Activated CD4-positive, alpha-beta memory T cell treated with anti-CD3 and anti-CD28 coated beads, Interleukin-2, amount 10 ng/mL, durations not matched to agents 7 days and 5 days (primary cell): ENCODE measurements at regions of chr1 and their contacts with region 1.

Region 1: GRCh38 chr1:145963995-145964901 is at the starts of genes ANKRD34A and POLR3GL:
- DNase-seq: peak; percentile 95
- H3K4me3 Mint-ChIP-seq: peak within 1 kb of the TSS; percentile 96
- H3K27ac Mint-ChIP-seq: peak within 1 kb of the TSS; percentile 79
- H3K4me1 Mint-ChIP-seq: peaks cover 50% of the 10 kb centered on the region
- H3K27me3 Mint-ChIP-seq: peaks cover 5% of the 10 kb centered on the region
- total RNA-seq, gene ANKRD34A: 2.9 to 3.7 TPM
- total RNA-seq, gene POLR3GL: 32.4 to 33.7 TPM

Region 2: DNA sequence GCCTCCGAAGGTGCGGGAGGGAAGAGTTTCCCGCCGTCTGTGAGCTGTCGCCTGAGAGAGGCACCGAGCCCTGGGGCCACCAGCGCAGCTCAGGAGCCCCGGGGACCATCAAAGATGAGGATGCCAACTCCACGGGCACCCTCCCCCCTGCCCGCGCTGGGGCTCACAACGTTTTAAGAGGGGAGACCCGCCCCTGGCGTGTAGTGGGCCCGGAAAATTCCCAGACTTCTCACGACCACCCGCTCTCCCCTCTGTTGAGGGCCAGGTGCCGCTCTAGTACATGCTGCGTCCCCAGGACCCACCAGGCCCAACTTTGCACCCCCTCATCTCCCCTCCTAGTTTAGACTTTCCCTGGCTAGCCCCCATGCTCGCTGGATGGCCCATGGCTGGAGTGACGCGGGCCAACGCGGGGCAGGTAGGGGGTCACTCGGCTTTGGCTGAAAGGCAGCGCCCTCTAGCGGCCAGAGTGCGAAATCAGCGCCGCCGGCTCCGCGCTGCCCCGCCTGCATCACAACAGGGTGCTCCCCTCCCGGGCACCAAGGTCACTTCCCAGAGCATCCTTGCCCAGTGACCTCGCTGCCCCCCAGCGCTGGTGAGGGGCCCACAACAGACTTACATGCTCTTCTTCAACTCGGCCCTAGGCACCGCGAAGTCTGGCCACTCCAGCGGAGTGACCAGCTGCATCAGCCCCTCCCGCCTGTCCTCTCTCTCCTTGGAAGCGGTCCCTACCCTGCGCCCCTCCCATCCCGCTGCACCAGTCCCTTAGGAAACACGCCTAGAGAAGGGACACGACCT is 243.2 kb before region 1 on chr1:
- CTCF ChIA-PET with region 1: no interaction called
- POLR2A ChIA-PET with region 1: no interaction called
- DNase-seq: peak; percentile 75
- H3K4me3 Mint-ChIP-seq: peak overlapping the region; percentile 24
- H3K27ac Mint-ChIP-seq: no peak overlapping the region
- H3K4me1 Mint-ChIP-seq: peaks cover 28% of the 10 kb centered on the region
- H3K27me3 Mint-ChIP-seq: peaks cover 17% of the 10 kb centered on the region

Region 3: GRCh38 chr1:145918144-145918992 is 45.9 kb before region 1 on chr1 and contains the start of gene PEX11B:
- CTCF ChIA-PET with region 1: no interaction called
- POLR2A ChIA-PET with region 1: interaction called, 38 read pairs
- DNase-seq: peak; percentile 92
- H3K4me3 Mint-ChIP-seq: peak within 1 kb of the TSS; percentile 90
- H3K27ac Mint-ChIP-seq: peak within 1 kb of the TSS; percentile 94
- H3K4me1 Mint-ChIP-seq: peaks cover 47% of the 10 kb centered on the region
- H3K27me3 Mint-ChIP-seq: no peaks in the 10 kb centered on the region
- total RNA-seq, gene PEX11B: 29.0 to 33.2 TPM

Region 4: DNA sequence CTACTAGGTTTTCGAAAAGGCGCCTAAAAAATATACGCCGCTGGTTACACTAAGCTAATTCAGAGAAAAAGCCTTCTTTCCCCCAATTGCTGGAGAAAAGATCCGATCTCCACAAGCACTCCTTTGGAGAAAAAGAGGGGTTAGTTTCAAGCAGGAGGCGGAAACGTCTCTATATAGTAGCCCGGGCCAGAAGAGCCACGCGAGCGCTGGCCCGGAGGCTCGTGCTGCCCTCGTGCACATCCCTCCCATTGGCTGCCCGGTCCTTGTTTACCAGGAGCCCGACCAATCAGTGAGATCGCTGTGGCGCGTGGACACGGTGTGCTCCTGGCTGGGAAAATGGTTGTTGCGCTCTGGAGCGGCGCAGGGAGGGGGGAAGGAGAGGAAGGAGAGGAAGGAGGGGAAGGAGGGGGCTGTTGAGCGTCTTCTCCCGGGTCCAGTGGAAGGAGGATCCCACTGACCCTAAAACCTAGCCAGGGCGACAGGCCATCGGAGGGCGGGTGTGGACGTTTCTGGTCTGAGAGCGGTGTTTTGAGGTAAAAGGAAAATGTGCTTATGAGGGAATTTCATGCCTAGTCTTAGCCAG is 32.3 kb after region 1 on chr1 and contains the start of gene TXNIP:
- CTCF ChIA-PET with region 1: interaction called, 8 read pairs
- POLR2A ChIA-PET with region 1: interaction called, 66 read pairs
- DNase-seq: peak; percentile 96
- H3K4me3 Mint-ChIP-seq: peak within 1 kb of the TSS; percentile 93
- H3K27ac Mint-ChIP-seq: peak within 1 kb of the TSS; percentile 97
- H3K4me1 Mint-ChIP-seq: peaks cover 63% of the 10 kb centered on the region
- H3K27me3 Mint-ChIP-seq: no peaks in the 10 kb centered on the region
- total RNA-seq, gene TXNIP: 397 to 407 TPM

Region 5: DNA sequence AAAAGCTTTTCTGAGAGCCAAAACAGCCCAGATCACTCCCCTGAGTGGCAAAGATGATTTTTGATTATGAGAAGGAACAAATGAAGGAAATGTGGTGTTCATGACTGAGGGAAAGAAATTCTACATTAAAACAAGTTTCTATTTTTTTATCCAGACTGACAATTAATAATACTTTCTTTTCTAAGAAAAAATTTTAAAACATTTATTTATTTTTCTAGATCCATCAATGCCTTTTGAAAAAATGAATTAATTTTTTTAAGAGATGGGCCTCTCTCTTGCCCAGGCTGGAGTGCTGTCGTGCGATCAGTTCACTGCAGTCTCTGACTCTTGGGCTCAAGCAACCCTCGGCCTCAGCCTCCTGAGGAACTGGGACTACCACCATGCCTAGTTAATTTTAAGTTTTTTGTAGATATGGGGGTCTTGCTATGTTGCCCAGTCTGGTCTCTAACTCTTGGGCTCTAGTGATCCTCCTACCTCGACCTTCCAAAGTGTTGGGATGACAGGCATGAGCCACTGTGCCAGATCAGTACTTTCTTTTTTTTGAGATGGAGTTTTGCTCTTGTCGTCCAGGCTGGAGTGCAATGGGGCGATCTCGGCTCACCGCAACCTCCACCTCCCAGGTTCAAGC is 43.4 kb after region 1 on chr1:
- CTCF ChIA-PET with region 1: interaction called, 16 read pairs
- POLR2A ChIA-PET with region 1: interaction called, 13 read pairs
- DNase-seq: no peak
- H3K4me3 Mint-ChIP-seq: peak overlapping the region; percentile 55
- H3K27ac Mint-ChIP-seq: peak overlapping the region; percentile 87
- H3K4me1 Mint-ChIP-seq: peaks cover 36% of the 10 kb centered on the region
- H3K27me3 Mint-ChIP-seq: no peaks in the 10 kb centered on the region

Region 6: DNA sequence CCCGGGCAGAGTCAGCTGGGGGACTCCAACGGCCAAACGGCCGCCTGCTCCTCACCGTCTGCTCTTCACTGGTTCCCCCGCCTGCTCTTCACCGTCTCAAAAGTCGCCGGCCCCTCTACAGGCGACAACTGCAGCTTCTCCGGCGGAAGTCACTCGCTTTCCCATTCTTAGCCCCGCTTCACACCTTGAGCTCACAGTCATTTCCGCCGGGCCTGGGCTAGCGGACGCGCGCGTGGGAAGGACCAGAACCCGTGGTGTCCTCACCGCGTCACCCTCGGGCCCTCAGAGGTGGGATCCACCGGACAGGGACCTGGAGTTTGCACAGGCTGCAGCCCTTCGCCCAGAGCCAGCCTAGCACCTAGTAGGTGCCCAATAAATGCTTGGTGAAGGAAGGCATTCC is 85.2 kb after region 1 on chr1:
- CTCF ChIA-PET with region 1: no interaction called
- POLR2A ChIA-PET with region 1: interaction called, 29 read pairs
- DNase-seq: no peak
- H3K4me3 Mint-ChIP-seq: no peak overlapping the region
- H3K27ac Mint-ChIP-seq: no peak overlapping the region
- H3K4me1 Mint-ChIP-seq: peaks cover 32% of the 10 kb centered on the region
- H3K27me3 Mint-ChIP-seq: no peaks in the 10 kb centered on the region